A549 (cell line): ENCODE measurements at regions of chr2 and their contacts with region 1.

Region 1: GRCh38 chr2:46887028-46887885 is 28.3 kb downstream of the MCFD2 start:
- DNase-seq: no peak
- ATAC-seq: no peak
- H3K4me3 ChIP-seq: no peak overlapping the region
- H3K27ac ChIP-seq: peak overlapping the region; percentile 87 to 91
- H3K4me1 ChIP-seq: peaks cover 51% of the 10 kb centered on the region
- CTCF ChIP-seq: no peak
- EP300 ChIP-seq: no peak
- POLR2A ChIP-seq: no peak
- RAD21 ChIP-seq: no peak

Region 2: GRCh38 chr2:46632349-46632748 is 254.9 kb before region 1 on chr2:
- CTCF ChIA-PET with region 1: interaction called, 38 read pairs
- POLR2A ChIA-PET with region 1: no interaction called
- DNase-seq: peak; percentile 44 to 84
- ATAC-seq: peak in 1 of 2 experiments; percentile 67; a peak in 4 of 6 replicates
- H3K4me3 ChIP-seq: no peak overlapping the region
- H3K27ac ChIP-seq: peak overlapping the region; percentile 89 to 97
- H3K4me1 ChIP-seq: peaks cover 41% of the 10 kb centered on the region
- CTCF ChIP-seq: peak; percentile 94
- EP300 ChIP-seq: no peak
- POLR2A ChIP-seq: no peak
- RAD21 ChIP-seq: peak; percentile 97 to 98

Region 3: DNA sequence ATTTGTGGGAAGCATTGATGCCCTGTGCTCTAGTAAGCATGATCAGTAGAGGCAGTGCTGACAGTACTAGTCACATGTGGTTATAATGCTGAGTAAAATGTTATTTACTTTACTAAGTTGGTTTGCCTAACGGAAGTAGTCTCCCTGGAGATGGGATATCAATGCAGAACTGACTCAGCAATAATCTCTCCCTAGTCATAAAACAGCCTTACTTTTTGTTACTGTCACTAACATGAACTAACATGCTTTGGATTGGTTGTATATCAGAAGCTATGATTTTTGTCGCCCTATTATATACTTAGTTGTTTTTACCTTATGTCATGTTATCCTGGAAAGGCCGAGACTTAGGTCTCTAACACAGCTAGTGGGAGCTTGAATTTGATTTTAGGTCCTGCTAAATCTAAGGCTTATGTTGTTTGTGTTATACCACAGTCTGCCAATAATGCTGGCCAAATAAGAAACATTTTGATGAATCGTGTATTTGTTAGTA is 138.2 kb before region 1 on chr2:
- CTCF ChIA-PET with region 1: interaction called, 12 read pairs
- POLR2A ChIA-PET with region 1: no interaction called
- DNase-seq: peak; percentile 47 to 83
- ATAC-seq: peak; percentile 92 to 98
- H3K4me3 ChIP-seq: no peak overlapping the region
- H3K27ac ChIP-seq: peak overlapping the region; percentile 44 to 79
- H3K4me1 ChIP-seq: peaks cover 71% of the 10 kb centered on the region
- CTCF ChIP-seq: no peak
- EP300 ChIP-seq: no peak
- POLR2A ChIP-seq: no peak
- RAD21 ChIP-seq: no peak

Region 4: DNA sequence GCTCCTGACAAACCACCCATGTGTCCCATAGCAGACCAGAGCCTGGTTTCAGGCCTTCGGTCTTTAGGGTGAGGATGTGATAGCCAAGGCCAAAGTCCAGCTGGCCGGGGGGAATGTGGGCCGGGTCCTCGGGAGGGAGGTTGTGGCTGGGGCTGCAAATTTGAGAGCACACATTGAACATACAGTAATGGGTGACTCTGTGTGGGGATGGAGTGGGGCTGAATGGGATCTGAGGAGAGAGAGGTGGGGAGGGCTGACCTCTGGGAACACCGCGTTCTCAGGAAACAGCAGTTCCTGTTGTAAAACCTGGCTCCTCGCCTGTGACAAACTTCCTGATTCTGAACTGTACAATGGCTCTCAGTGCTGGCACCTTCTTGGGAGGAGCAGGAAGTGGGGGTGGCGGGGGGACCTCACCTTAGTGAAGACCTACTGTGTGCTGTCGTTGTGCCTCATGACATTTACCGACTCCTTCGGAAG is 20.4 kb before region 1 on chr2:
- CTCF ChIA-PET with region 1: interaction called, 15 read pairs
- POLR2A ChIA-PET with region 1: no interaction called
- DNase-seq: no peak
- ATAC-seq: no peak
- H3K4me3 ChIP-seq: no peak overlapping the region
- H3K27ac ChIP-seq: peak overlapping the region; percentile 91 to 97
- H3K4me1 ChIP-seq: peaks cover 20% of the 10 kb centered on the region
- CTCF ChIP-seq: no peak
- EP300 ChIP-seq: no peak
- POLR2A ChIP-seq: no peak
- RAD21 ChIP-seq: no peak

Region 5: DNA sequence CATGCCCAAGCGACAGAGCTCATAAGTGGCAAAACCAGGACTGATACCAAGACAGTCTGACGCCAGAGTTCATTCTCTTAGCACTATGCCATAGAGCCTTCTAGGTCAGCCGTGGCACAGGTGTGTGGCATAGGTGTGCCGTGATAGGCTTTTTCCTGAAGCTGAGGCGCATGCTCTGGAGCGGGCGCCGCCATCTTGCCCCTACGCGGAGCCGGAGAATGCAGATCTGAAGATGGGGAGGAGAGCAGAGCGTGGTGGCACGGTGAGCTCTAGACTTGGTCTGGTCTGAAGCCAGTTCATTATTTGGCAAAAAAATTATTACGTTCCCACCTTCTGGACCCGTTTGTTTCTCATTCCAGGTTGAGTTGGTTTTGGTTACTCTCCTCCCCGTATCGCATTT is 11.8 kb after region 1 on chr2:
- CTCF ChIA-PET with region 1: interaction called, 39 read pairs
- POLR2A ChIA-PET with region 1: no interaction called
- DNase-seq: no peak
- ATAC-seq: no peak
- H3K4me3 ChIP-seq: no peak overlapping the region
- H3K27ac ChIP-seq: no peak overlapping the region
- H3K4me1 ChIP-seq: 0 out of 3 replicates have a peak, but pooled peaks cover 9% of the 10 kb centered on the region
- CTCF ChIP-seq: no peak
- EP300 ChIP-seq: no peak
- POLR2A ChIP-seq: no peak
- RAD21 ChIP-seq: no peak